Ascending aorta (tissue), 2 donors: ENCODE measurements at regions of chr15 and their contacts with region 1.

Region 1: GRCh38 chr15:72272213-72273002 is at the start of gene PARP6:
- DNase-seq: peak; percentile 96 to 99
- H3K4me3 ChIP-seq: peak within 1 kb of the TSS; percentile 80 to 96
- H3K27ac ChIP-seq: peak within 1 kb of the TSS; percentile 88 to 94
- H3K4me1 ChIP-seq: peaks cover 0 to 11% of the 10 kb centered on the region in 2 donors
- H3K27me3 ChIP-seq: no peaks in the 10 kb centered on the region
- CTCF ChIP-seq: peak; percentile 60 to 73 (median 71)
- total RNA-seq, gene PARP6: 26.5 TPM

Region 2: GRCh38 chr15:72117486-72118399 is 154.7 kb before region 1 on chr15 and contains the start of gene MYO9A:
- intact Hi-C with region 1: loop called (anchors 1 kb)
- DNase-seq: peak; percentile 84 to 99
- H3K4me3 ChIP-seq: peak within 1 kb of the TSS; percentile 74 to 87
- H3K27ac ChIP-seq: peak within 1 kb of the TSS; percentile 90 to 97
- H3K4me1 ChIP-seq: peaks cover 0 to 10% of the 10 kb centered on the region in 2 donors
- H3K27me3 ChIP-seq: no peaks in the 10 kb centered on the region
- CTCF ChIP-seq: no peak
- total RNA-seq, gene MYO9A: 128 TPM

Region 3: GRCh38 chr15:72136170-72137051 is 136.0 kb before region 1 on chr15:
- intact Hi-C with region 1: no loop called
- DNase-seq: no peak
- H3K4me3 ChIP-seq: no peak overlapping the region
- H3K27ac ChIP-seq: no peak overlapping the region
- H3K4me1 ChIP-seq: no peaks in the 10 kb centered on the region
- H3K27me3 ChIP-seq: no peaks in the 10 kb centered on the region
- CTCF ChIP-seq: no peak

Region 4: GRCh38 chr15:72199711-72200212 is 72.6 kb before region 1 on chr15:
- intact Hi-C with region 1: loop called (anchors 1 kb)
- DNase-seq: peak; percentile 28 to 88
- H3K4me3 ChIP-seq: no peak overlapping the region
- H3K27ac ChIP-seq: peak overlapping the region in 1 of 2 donors; percentile 4
- H3K4me1 ChIP-seq: peaks cover 6 to 7% of the 10 kb centered on the region in 2 donors
- H3K27me3 ChIP-seq: no peaks in the 10 kb centered on the region
- CTCF ChIP-seq: peak; percentile 86 to 95 (median 90)

Region 5: DNA sequence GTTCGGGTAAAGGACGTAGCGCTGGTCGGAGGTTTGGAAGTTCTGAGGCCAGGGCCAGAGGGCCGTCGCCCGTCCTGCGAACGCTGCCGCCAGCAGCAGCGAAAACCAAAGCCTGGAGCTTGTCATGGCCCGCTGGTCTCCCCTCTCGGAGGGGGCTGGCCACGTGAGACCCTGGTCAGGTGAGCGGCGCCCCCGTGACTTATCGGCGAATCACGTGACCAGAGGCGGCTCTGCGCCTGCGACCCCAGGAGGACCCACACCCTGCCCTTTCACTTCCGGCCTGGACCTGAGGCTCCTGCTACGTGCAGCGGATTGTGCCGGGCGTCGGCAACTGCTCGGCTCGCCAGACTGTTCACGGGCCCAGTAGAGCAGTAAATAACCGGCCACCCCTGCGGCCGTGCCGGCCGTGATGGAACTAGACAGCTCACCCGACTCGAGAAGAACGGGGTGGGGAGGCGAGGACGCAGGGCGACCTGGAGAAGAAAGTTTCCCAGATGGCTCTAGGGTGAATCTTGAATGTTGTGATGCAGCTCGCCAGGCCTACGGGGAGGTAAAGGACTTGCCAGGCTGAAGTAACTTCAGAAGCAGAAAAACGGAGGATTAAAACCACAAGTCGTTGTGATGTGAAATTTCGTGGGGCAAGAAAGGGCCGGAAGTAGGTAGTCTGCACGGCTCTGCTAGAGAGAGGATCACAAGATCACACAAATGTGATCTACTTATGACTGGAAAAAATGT is 103.6 kb after region 1 on chr15 and contains the start of gene HEXA:
- intact Hi-C with region 1: loop called (anchors 1 kb)
- DNase-seq: peak; percentile 87 to 98
- H3K4me3 ChIP-seq: peak within 1 kb of the TSS; percentile 86 to 87
- H3K27ac ChIP-seq: peak within 1 kb of the TSS; percentile 84 to 89
- H3K4me1 ChIP-seq: peaks cover 0 to 13% of the 10 kb centered on the region in 2 donors
- H3K27me3 ChIP-seq: no peaks in the 10 kb centered on the region
- CTCF ChIP-seq: no peak
- total RNA-seq, gene HEXA: 111 TPM

Region 6: GRCh38 chr15:72585476-72586082 is 313.2 kb after region 1 on chr15:
- intact Hi-C with region 1: no loop called
- DNase-seq: no peak
- H3K4me3 ChIP-seq: no peak overlapping the region
- H3K27ac ChIP-seq: no peak overlapping the region
- H3K4me1 ChIP-seq: no peaks in the 10 kb centered on the region
- H3K27me3 ChIP-seq: no peaks in the 10 kb centered on the region
- CTCF ChIP-seq: no peak